ENCODE measurements at regions of chr4 and their contacts with region 1.

Region 1: DNA sequence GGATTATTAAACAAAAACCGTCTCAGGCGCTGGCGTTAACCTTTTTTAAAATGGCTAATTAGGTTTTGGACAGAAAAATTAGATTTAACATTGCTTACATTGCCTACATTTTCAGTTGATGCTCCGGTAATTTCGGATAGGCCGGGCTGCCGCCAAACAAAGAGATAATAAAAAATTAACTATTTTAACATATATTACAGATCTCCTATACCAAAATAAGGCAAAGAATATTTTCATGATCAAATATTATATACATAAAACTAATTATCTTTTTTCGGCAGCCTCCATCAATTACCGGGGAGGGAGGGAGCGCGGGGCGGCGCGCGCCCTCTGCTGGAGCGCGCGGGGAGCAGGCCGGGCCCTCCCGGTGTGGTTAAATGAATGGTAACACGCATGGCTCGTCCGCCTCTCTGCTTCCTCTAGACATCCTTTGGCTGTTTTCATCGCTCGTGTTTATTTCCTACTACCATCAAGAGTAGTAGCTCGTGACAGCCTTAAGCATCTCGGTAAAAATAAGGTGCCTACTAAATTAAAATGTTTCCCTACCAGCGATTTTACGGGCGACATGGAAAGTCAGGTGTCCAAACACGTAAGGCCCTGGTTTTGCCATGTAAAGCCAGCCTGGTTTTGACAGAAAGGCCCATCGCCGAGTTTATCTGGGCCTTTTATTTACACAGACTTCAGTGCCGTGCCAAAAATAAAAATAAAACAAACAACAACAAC is 52.4 kb upstream of the TMEM33 start:
- DNase-seq: peak; percentile 66
- ATAC-seq: peak; percentile 92

Region 2: GRCh38 chr4:41281038-41281634 is 601.6 kb before region 1 on chr4:
- intact Hi-C with region 1: loop called (anchors 10 kb)
- DNase-seq: no peak
- ATAC-seq: peak; percentile 96